ENCODE measurements at regions of chr7 and their contacts with region 1.

Region 1: GRCh38 chr7:22488643-22489462 is 11.1 kb downstream of the STEAP1B start:
- DNase-seq: peak; percentile 56 to 64
- H3K4me3 ChIP-seq: no peak overlapping the region
- H3K27ac ChIP-seq: no peak overlapping the region
- H3K4me1 ChIP-seq: no peaks in the 10 kb centered on the region
- H3K27me3 ChIP-seq: no peaks in the 10 kb centered on the region
- CTCF ChIP-seq: peak; percentile 80 to 87 (median 86)
- POLR2A ChIP-seq: no peak

Region 2: GRCh38 chr7:21580073-21580521 is 908.8 kb before region 1 on chr7:
- intact Hi-C with region 1: no loop called
- DNase-seq: no peak
- H3K4me3 ChIP-seq: no peak overlapping the region
- H3K27ac ChIP-seq: no peak overlapping the region
- H3K4me1 ChIP-seq: no peaks in the 10 kb centered on the region
- H3K27me3 ChIP-seq: no peaks in the 10 kb centered on the region
- CTCF ChIP-seq: no peak
- POLR2A ChIP-seq: no peak

Region 3: GRCh38 chr7:22110227-22110839 is 378.5 kb before region 1 on chr7:
- intact Hi-C with region 1: loop called (anchors 5 kb)
- DNase-seq: peak; percentile 62 to 74
- H3K4me3 ChIP-seq: no peak overlapping the region
- H3K27ac ChIP-seq: no peak overlapping the region
- H3K4me1 ChIP-seq: no peaks in the 10 kb centered on the region
- H3K27me3 ChIP-seq: no peaks in the 10 kb centered on the region
- CTCF ChIP-seq: peak; percentile 77 to 91 (median 86)
- POLR2A ChIP-seq: no peak

Region 4: DNA sequence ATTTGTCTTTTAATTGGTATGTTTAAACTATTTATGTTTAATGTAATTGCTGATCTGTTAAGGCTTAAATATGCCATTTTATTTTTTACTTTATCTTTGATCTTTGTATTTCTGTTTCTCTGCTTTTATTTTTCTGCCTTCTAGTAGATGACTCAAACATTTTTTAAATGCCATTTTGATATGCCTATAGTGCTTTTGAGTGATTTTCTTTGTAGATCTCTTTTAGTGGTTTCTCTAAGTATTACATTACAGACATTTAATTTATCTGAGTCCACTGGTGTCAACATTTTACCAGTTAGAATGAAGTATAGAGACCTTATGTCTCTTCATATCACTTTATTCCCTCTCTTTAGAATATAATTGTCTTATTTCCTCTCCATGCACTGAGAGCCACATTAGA is 270.9 kb after region 1 on chr7:
- intact Hi-C with region 1: no loop called
- DNase-seq: no peak
- H3K4me3 ChIP-seq: no peak overlapping the region
- H3K27ac ChIP-seq: no peak overlapping the region
- H3K4me1 ChIP-seq: no peaks in the 10 kb centered on the region
- H3K27me3 ChIP-seq: no peaks in the 10 kb centered on the region
- CTCF ChIP-seq: no peak
- POLR2A ChIP-seq: no peak

Measured in uterus (tissue), 4 donors.